Activated B cell treated with CpG ODN at 0.5 μM for 24 hours (primary cell): ENCODE measurements at regions of chr13 and their contacts with region 1.

Region 1: GRCh38 chr13:27374650-27375049 is 49.8 kb upstream of the GTF3A start:
- DNase-seq: no peak
- ATAC-seq: peak; percentile 88
- H3K4me3 Mint-ChIP-seq: no peak overlapping the region
- H3K27ac Mint-ChIP-seq: no peak overlapping the region
- H3K4me1 Mint-ChIP-seq: peaks cover 2% of the 10 kb centered on the region
- H3K27me3 Mint-ChIP-seq: peaks cover 22% of the 10 kb centered on the region
- CTCF ChIP-seq: peak; percentile 75

Region 2: DNA sequence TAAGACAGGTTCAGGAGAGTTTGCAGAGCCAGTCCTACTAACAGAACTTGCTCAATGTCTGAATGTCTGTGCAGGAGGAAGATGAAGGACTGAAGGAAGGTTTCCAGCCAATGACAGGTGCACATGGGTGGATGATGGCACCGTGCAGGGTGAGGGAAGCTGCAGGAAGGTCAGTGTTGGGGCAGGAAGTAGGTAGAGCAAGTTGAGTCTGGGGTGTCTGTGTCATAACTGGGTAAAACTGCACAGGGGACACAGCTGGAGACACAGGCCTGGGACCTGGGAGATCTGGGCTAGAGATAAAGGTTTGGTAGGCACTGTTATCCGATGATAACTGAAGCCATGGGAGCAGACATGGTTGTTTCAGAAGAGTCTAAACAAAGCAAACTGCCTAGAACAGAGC is 319.9 kb before region 1 on chr13:
- CTCF ChIA-PET with region 1: no interaction called
- POLR2A ChIA-PET with region 1: no interaction called
- intact Hi-C with region 1: no loop called
- DNase-seq: no peak
- ATAC-seq: no peak
- H3K4me3 Mint-ChIP-seq: no peak overlapping the region
- H3K27ac Mint-ChIP-seq: no peak overlapping the region
- H3K4me1 Mint-ChIP-seq: peaks cover 5% of the 10 kb centered on the region
- H3K27me3 Mint-ChIP-seq: no peaks in the 10 kb centered on the region
- CTCF ChIP-seq: no peak

Region 3: DNA sequence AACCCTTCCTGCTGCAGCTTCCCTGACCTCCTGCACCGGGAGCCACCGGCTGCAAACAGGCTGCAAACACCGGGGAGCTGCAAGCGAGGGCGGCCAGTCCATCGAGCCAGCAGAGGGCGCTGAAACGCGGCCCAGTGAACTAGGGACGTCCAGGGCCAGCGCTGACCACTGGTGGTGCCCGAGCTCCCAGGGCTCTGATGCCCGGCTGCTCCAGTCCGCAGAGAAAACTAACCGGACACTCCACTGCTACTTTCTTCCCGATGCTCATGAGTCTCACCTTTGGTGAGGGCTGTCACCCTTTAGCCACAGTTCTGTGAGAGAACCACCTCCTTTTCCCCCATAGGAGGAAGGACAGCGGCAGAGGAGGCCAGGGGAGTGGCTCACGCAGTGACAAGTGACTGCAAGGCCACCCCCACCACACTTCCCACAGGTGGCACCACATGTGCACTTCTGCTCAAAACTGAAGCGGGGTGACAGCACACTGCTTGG is 158.5 kb after region 1 on chr13:
- CTCF ChIA-PET with region 1: interaction called, 3 read pairs
- POLR2A ChIA-PET with region 1: no interaction called
- intact Hi-C with region 1: loop called (anchors 2 kb)
- DNase-seq: peak; percentile 39
- ATAC-seq: peak; percentile 72
- H3K4me3 Mint-ChIP-seq: peak overlapping the region; percentile 36
- H3K27ac Mint-ChIP-seq: no peak overlapping the region
- H3K4me1 Mint-ChIP-seq: peaks cover 23% of the 10 kb centered on the region
- H3K27me3 Mint-ChIP-seq: no peaks in the 10 kb centered on the region
- CTCF ChIP-seq: peak; percentile 53

Region 4: DNA sequence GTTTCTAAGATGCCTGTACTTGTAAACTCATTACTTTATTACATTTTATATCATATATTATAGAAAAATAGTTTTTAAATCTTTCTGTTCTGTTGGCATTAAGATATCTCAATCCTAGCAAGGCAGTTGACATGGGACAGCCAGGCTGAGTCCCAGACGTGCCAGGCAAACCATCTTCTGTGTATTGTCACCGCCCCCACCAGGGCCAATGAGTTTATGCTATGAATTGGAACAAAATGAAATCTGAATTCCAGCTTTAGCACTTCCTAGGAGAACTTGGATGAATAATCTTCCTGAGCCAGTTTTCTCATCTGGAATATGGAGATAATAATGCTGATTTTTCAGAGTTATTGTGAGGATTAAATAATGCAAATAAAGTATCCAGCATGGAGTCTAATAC is 337.8 kb after region 1 on chr13:
- CTCF ChIA-PET with region 1: interaction called, 3 read pairs
- POLR2A ChIA-PET with region 1: no interaction called
- intact Hi-C with region 1: loop called (anchors 1 kb)
- DNase-seq: no peak
- ATAC-seq: no peak
- H3K4me3 Mint-ChIP-seq: no peak overlapping the region
- H3K27ac Mint-ChIP-seq: no peak overlapping the region
- H3K4me1 Mint-ChIP-seq: no peaks in the 10 kb centered on the region
- H3K27me3 Mint-ChIP-seq: peaks cover 13% of the 10 kb centered on the region
- CTCF ChIP-seq: no peak